ENCODE measurements at regions of chr3 and their contacts with region 1.

Region 1: GRCh38 chr3:42539869-42540714 is 37.6 kb downstream of the VIPR1 start:
- DNase-seq: no peak
- H3K4me3 ChIP-seq: no peak overlapping the region
- H3K27ac ChIP-seq: no peak overlapping the region
- H3K4me1 ChIP-seq: peaks cover 0 to 28% (median 0%) of the 10 kb centered on the region in 3 donors
- H3K27me3 ChIP-seq: no peaks in the 10 kb centered on the region
- CTCF ChIP-seq: peak; percentile 71 to 83 (median 78)
- POLR2A ChIP-seq: no peak

Region 2: DNA sequence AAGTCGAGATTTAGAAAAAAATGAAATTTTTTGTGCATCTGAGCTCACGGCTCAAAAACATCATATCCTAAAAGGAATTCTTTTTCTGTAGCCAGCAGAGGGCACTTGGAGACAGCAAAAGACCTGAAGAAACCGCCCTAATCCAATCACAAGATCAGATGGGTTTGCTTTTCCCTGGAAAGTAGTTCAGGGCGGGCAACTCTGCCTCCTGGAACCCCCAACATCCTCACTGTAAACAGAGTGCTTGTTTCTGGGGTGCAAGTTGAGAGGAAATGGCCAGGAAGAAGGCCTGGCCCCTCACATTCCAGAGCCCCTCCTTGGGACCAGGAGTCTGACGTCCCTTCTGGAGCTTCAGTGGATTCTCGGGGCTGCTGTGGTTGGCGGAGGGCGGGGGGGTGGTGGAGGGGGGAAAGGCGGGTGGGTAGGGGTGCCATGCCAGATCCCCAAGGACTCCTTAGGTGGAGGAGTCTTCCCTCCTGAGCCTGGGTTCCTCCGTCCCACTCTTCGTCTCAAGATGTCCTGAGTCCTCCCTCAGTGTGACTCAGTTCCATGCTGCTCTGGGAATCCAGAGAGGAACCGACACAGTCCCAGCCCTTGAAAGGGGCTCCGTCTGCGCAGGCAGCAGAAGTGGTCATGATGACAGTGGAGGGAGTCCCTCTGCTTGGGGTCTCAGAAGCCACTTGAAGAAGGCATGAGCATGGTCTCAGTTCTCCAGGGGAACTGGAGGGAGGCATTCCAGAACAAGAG is 310.0 kb before region 1 on chr3:
- intact Hi-C with region 1: loop called (anchors 10 kb)
- DNase-seq: no peak
- H3K4me3 ChIP-seq: peak overlapping the region in 1 of 4 donors; percentile 27
- H3K27ac ChIP-seq: no peak overlapping the region
- H3K4me1 ChIP-seq: peaks cover 0 to 17% (median 0%) of the 10 kb centered on the region in 3 donors
- H3K27me3 ChIP-seq: peaks cover 0 to 18% (median 0%) of the 10 kb centered on the region in 4 donors
- CTCF ChIP-seq: peak in 5 of 6 experiments; percentile 41 to 62 (median 52)
- POLR2A ChIP-seq: no peak

Region 3: DNA sequence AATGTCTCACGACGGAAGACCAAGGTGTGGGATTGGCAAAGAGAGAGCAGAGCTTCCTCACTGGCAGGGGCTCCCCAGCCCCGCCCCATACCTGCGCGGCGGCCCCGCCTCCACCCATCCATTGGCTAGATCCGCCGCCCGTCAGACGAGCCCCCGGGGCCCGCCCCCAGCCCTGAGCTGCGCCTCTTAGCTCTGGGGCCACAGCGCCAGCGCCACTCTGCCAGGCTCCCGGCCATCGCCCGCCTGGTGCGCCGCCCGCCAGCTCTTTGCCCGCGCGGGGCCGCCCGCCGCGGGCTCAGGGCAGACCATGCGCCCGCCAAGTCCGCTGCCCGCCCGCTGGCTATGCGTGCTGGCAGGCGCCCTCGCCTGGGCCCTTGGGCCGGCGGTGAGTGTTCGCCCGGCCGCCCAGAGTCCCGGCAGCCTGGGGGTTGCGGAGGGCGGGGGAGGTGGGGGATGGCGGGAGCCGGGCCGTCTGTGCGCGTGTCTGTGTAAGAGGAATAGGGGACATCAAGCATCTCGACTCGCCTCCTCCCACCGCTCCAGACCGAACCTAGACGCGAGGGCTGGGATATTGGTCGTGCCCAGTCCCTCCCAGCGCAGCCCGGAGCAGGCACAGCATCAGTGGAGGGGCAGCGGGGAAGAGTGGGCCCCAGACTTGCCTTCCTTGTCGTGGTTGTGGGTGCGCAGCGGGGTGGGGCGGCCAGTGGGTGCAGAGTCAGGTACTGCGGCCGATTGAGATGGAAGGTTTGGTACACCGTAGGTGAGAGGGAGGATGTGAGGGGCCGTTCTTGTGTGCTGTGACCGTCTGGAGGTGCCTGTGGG is 37.5 kb before region 1 on chr3 and contains the start of gene VIPR1:
- intact Hi-C with region 1: loop called (anchors 5 kb)
- DNase-seq: peak; percentile 24
- H3K4me3 ChIP-seq: peak within 1 kb of the TSS; percentile 49 to 73 (median 60)
- H3K27ac ChIP-seq: peak within 1 kb of the TSS; percentile 39 to 77 (median 66)
- H3K4me1 ChIP-seq: peaks cover 13 to 44% (median 27%) of the 10 kb centered on the region in 3 donors
- H3K27me3 ChIP-seq: peaks cover 0 to 57% (median 0%) of the 10 kb centered on the region in 4 donors
- CTCF ChIP-seq: no peak
- POLR2A ChIP-seq: peak in 2 of 4 donors; percentile 46 to 65
- total RNA-seq, gene VIPR1: 3.6 to 15.4 (median 8.6) TPM

Region 4: GRCh38 chr3:42667523-42668412 is 127.7 kb after region 1 on chr3:
- intact Hi-C with region 1: no loop called
- DNase-seq: no peak
- H3K4me3 ChIP-seq: no peak overlapping the region
- H3K27ac ChIP-seq: no peak overlapping the region
- H3K4me1 ChIP-seq: peaks cover 10 to 50% (median 13%) of the 10 kb centered on the region in 3 donors
- H3K27me3 ChIP-seq: peaks cover 0 to 3% (median 0%) of the 10 kb centered on the region in 4 donors
- CTCF ChIP-seq: no peak
- POLR2A ChIP-seq: no peak

Measured in esophagus squamous epithelium (tissue), 5 donors.